Heart left ventricle (tissue), 16 donors: ENCODE measurements at regions of chr21 and their contacts with region 1.

Region 1: GRCh38 chr21:34202553-34203372 is 129.4 kb downstream of the MRPS6 start:
- DNase-seq: peak in 1 of 5 donors; percentile 26
- ATAC-seq: no peak
- H3K4me3 ChIP-seq: peak overlapping the region in 4 of 12 donors; percentile 5 to 56 (median 30)
- H3K27ac ChIP-seq: peak overlapping the region in 2 of 12 donors; percentile 37 to 79
- H3K4me1 ChIP-seq: peaks cover 0 to 63% (median 14%) of the 10 kb centered on the region in 12 donors
- H3K27me3 ChIP-seq: no peaks in the 10 kb centered on the region
- CTCF ChIP-seq: no peak
- POLR2A ChIP-seq: no peak

Region 2: DNA sequence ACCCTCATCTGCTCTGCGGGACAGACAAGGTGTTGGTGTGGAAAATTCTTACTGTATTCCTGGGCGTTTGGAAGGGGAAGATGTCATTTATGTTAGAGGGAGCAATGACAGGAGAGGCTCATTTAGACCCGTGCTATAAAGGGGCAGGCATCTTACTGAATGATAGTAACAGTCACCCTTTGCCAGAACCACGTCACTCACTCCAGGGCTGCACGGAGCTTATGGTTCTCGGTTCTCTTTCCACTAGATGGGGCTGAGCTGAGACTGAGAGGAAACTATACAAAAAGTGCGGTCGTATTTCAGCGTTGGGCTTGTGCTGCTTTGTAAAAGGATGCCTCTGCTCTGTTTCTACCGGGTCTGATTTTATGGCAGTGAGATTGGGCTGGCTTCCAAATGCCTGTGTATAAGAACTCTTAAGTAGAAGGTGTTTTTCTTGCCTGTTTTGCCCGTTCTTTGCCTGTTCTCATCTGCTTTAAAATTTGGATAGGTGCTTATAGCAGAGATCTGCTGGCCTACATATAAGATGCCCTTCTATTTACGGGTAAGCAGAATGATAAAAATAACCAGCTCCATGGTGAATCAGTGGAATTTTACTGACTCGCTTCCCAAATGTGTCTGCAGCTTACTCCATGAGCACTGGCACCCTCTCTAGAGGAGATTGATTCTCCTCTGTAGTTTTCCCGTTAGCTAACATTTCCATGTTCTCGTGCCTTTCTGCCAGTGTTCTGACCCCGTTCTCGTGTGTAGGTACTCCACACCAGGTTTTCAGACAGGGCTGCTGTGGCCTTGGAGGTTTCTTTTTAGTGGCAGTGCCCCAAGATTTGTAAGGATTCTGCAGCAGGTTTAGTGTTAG is 73.5 kb before region 1 on chr21:
- intact Hi-C with region 1: loop called in 2 of 10 experiments (anchors 1 to 5 kb)
- DNase-seq: peak; percentile 71 to 85 (median 75)
- ATAC-seq: peak; percentile 93 to 94 (median 94)
- H3K4me3 ChIP-seq: peak overlapping the region in 6 of 12 donors; percentile 13 to 39 (median 24)
- H3K27ac ChIP-seq: peak overlapping the region; percentile 48 to 91 (median 78)
- H3K4me1 ChIP-seq: peaks cover 4 to 67% (median 52%) of the 10 kb centered on the region in 12 donors
- H3K27me3 ChIP-seq: no peaks in the 10 kb centered on the region
- CTCF ChIP-seq: peak in 11 of 12 donors; percentile 12 to 65 (median 39)
- POLR2A ChIP-seq: peak in 1 of 2 donors; percentile 22

Region 3: GRCh38 chr21:34276711-34277425 is 74.1 kb after region 1 on chr21:
- intact Hi-C with region 1: no loop called
- DNase-seq: no peak
- ATAC-seq: no peak
- H3K4me3 ChIP-seq: no peak overlapping the region
- H3K27ac ChIP-seq: no peak overlapping the region
- H3K4me1 ChIP-seq: peaks cover 0 to 12% (median 0%) of the 10 kb centered on the region in 12 donors
- H3K27me3 ChIP-seq: no peaks in the 10 kb centered on the region
- CTCF ChIP-seq: no peak
- POLR2A ChIP-seq: no peak

Region 4: DNA sequence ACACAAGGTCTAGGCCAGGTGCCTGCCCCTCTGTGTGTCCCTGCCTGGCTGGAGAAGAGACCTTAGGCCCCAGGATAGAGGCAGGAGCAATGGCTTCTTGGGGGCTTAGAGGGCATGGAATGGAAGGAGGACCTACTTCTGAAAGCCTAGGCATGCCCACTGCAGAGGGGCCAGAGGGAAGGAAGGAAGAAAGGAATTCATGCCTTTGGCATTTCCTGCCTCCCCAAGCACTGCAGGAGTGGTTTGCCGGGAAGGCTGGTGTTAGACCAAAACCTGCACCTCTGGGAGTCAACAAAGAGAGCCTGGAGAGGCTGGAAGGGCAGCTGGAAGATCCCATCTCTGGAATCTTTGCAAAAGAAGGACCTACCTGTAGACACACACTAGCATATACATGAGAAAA is 110.4 kb after region 1 on chr21:
- intact Hi-C with region 1: loop called in 1 of 10 experiments (anchors 10 kb)
- DNase-seq: no peak
- ATAC-seq: no peak
- H3K4me3 ChIP-seq: no peak overlapping the region
- H3K27ac ChIP-seq: no peak overlapping the region
- H3K4me1 ChIP-seq: peaks cover 0 to 17% (median 0%) of the 10 kb centered on the region in 12 donors
- H3K27me3 ChIP-seq: no peaks in the 10 kb centered on the region
- CTCF ChIP-seq: no peak
- POLR2A ChIP-seq: no peak

Region 5: GRCh38 chr21:34351786-34352241 is 149.1 kb after region 1 on chr21:
- intact Hi-C with region 1: loop called in 5 of 10 experiments (anchors 2 to 5 kb)
- DNase-seq: peak in 4 of 5 donors; percentile 36 to 70 (median 48)
- ATAC-seq: peak; percentile 73 to 88 (median 86)
- H3K4me3 ChIP-seq: no peak overlapping the region
- H3K27ac ChIP-seq: no peak overlapping the region
- H3K4me1 ChIP-seq: peaks cover 0 to 12% (median 2%) of the 10 kb centered on the region in 12 donors
- H3K27me3 ChIP-seq: no peaks in the 10 kb centered on the region
- CTCF ChIP-seq: peak; percentile 42 to 78 (median 70)
- POLR2A ChIP-seq: no peak